RWPE1 (cell line): ENCODE measurements at regions of chr7 and their contacts with region 1.

Region 1: GRCh38 chr7:16078076-16078952 is 343.0 kb downstream of the CRPPA start:
- DNase-seq: peak; percentile 38
- H3K27ac ChIP-seq: no peak overlapping the region
- CTCF ChIP-seq: peak; percentile 82

Region 2: GRCh38 chr7:16098585-16099179 is 20.4 kb after region 1 on chr7:
- CTCF ChIA-PET with region 1: interaction called, 10 read pairs
- POLR2A ChIA-PET with region 1: no interaction called
- DNase-seq: peak; percentile 34
- H3K27ac ChIP-seq: peak overlapping the region; percentile 54
- CTCF ChIP-seq: peak; percentile 84

Region 3: DNA sequence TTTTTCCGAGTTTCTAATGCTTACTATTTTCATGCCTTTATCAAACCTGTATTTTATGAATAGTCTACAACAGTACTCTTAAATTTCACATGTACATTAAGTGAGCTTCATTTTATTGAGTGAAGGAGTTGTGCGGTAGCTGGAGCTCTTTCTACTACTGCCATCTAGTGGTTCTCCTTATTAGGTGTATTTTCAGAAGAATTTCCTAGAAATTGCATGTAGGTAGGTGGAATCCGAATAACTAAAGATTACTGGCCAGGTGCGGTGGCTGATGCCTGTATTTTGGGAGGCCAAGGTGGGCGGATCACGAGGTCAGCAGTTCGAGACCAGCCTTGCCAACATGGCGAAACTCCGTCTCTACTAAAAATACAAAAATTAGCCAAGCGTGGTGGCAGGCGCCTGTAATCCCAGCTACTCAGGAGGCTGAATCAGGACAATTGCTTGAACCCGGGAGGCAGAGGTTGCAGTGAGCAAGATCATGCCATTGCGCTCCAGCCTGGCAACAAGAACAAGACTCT is 486.7 kb after region 1 on chr7:
- CTCF ChIA-PET with region 1: interaction called, 15 read pairs
- POLR2A ChIA-PET with region 1: no interaction called
- DNase-seq: peak; percentile 75
- H3K27ac ChIP-seq: no peak overlapping the region
- CTCF ChIP-seq: peak; percentile 88